Activated CD8-positive, alpha-beta T cell treated with anti-CD3 and anti-CD28 coated beads for 36 hours (primary cell): ENCODE measurements at regions of chr11 and their contacts with region 1.

Region 1: DNA sequence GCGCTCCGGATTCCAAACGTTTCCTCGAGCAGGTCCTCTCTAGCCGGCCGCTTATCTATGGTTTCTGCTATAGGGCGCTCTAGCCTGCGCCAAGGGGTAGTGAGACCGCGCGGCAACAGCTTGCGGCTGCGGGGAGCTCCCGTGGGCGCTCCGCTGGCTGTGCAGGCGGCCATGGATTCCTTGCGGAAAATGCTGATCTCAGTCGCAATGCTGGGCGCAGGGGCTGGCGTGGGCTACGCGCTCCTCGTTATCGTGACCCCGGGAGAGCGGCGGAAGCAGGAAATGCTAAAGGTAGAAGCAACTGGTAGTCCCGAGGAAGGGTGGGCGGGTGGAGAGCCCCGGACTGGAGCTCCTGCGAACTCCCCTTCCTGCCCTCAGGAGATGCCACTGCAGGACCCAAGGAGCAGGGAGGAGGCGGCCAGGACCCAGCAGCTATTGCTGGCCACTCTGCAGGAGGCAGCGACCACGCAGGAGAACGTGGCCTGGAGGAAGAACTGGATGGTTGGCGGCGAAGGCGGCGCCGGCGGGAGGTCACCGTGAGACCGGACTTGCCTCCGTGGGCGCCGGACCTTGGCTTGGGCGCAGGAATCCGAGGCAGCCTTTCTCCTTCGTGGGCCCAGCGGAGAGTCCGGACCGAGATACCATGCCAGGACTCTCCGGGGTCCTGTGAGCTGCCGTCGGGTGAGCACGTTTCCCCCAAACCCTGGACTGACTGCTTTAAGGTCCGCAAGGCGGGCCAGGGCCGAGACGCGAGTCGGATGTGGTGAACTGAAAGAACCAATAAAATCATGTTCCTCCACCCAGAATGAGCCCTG is at the starts of genes LBHD1 and UQCC3:
- DNase-seq: peak; percentile 96
- ATAC-seq: peak; percentile 91
- H3K4me3 Mint-ChIP-seq: peak within 1 kb of the TSS; percentile 91
- H3K27ac Mint-ChIP-seq: peak within 1 kb of the TSS; percentile 98
- H3K4me1 Mint-ChIP-seq: peaks cover 41% of the 10 kb centered on the region
- H3K27me3 Mint-ChIP-seq: no peaks in the 10 kb centered on the region
- CTCF ChIP-seq: no peak
- total RNA-seq, gene LBHD1: 12.0 to 12.9 TPM
- total RNA-seq, gene UQCC3: 4.7 TPM

Region 2: DNA sequence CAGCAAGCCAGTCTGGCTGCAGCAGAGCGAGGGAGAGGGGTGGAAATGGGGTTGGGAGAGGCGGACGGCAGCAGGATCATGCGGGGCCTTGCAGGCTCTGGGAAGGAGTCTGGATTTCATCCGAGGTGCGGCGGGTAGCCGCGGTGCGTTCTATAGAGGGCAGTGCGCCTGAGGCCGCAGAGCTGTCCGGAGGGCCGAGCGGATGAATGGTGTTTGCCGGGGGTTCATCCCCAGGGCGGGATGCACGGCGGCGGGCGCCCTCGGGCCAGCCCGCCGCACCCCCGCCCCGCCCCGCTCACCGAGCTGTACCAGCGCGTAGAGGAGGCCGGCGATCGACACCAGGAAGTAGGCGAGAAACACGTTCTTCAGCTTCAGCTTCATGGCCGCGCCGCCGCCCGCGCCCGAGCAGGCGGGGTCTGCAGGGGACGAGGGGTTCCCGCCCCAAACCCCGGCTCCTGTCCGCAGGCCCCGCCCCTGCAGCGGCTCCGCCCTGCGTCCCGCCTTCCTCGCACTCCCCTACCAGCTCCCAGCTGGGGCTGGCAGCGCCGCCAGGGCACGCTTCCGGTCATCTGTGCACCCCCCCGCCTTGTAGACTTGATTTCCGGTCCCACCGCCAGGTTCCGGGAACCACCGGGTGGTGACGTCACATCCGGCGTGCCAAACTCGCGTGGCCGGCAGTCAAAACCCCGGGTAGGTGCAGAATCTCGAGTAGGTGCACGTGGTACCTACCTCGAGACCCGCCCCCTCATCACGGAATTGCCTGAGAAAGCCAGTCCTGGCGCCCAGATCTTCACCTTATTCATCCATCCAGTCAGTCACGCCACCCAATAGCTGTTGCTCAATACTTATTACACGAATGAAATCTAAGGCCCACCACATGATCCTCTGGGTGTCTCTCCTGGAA is 50.0 kb before region 1 on chr11 and contains the start of gene B3GAT3:
- CTCF ChIA-PET with region 1: no interaction called
- POLR2A ChIA-PET with region 1: interaction called, 34 read pairs
- intact Hi-C with region 1: no loop called
- DNase-seq: peak; percentile 98
- ATAC-seq: peak; percentile 94
- H3K4me3 Mint-ChIP-seq: peak within 1 kb of the TSS; percentile 88
- H3K27ac Mint-ChIP-seq: peak within 1 kb of the TSS; percentile 91
- H3K4me1 Mint-ChIP-seq: peaks cover 24% of the 10 kb centered on the region
- H3K27me3 Mint-ChIP-seq: no peaks in the 10 kb centered on the region
- CTCF ChIP-seq: no peak
- total RNA-seq, gene B3GAT3: 59.1 to 61.4 TPM

Region 3: GRCh38 chr11:62652161-62653006 is 19.4 kb before region 1 on chr11:
- CTCF ChIA-PET with region 1: interaction called, 3 read pairs
- POLR2A ChIA-PET with region 1: interaction called, 263 read pairs
- intact Hi-C with region 1: no loop called
- DNase-seq: peak; percentile 48
- ATAC-seq: peak; percentile 4
- H3K4me3 Mint-ChIP-seq: peak overlapping the region; percentile 94
- H3K27ac Mint-ChIP-seq: peak overlapping the region; percentile 95
- H3K4me1 Mint-ChIP-seq: peaks cover 23% of the 10 kb centered on the region
- H3K27me3 Mint-ChIP-seq: no peaks in the 10 kb centered on the region
- CTCF ChIP-seq: no peak

Region 4: DNA sequence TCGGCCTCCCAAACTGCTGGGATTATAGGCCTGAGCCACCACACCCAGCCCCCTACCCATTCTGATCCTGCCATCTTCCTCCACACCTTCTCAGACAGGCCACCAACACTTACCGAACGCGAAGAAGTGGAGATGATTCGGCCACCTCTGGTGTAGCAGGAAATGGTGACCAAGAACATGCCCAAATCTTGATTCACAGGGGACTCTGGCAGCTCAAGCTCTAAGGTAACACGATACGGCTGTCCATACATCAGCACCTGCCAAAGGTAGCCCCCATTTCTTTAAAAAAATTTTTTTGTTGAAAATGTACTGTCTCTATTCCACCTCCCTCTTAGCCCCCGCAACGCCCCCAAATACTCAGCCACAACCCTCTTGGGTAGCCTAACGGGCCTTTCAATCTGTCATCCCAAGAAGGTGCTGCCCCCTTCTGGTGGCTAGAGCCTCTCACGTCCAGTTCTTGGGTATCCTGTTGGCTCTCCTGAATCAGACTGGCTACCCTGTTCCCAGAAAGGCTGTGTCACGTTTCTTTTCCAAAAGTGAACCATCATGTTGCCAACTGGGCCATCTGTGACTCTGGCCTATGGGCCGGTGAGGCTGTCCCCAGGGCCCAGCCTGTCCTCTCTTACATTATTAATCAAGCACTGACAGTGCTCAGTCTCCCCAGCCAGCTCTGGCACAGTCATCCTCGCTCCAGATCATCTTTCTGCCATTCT is 22.8 kb after region 1 on chr11:
- CTCF ChIA-PET with region 1: interaction called, 19 read pairs
- POLR2A ChIA-PET with region 1: interaction called, 9 read pairs
- intact Hi-C with region 1: no loop called
- DNase-seq: peak; percentile 87
- ATAC-seq: peak; percentile 84
- H3K4me3 Mint-ChIP-seq: no peak overlapping the region
- H3K27ac Mint-ChIP-seq: no peak overlapping the region
- H3K4me1 Mint-ChIP-seq: peaks cover 7% of the 10 kb centered on the region
- H3K27me3 Mint-ChIP-seq: no peaks in the 10 kb centered on the region
- CTCF ChIP-seq: peak; percentile 92